ENCODE measurements at regions of chr5 and their contacts with region 1.

Region 1: GRCh38 chr5:159133041-159133741 is 33.5 kb upstream of the EBF1 start:
- DNase-seq: peak; percentile 80
- H3K4me3 Mint-ChIP-seq: no peak overlapping the region
- H3K27ac Mint-ChIP-seq: no peak overlapping the region
- H3K4me1 Mint-ChIP-seq: peaks cover 7% of the 10 kb centered on the region
- H3K27me3 Mint-ChIP-seq: no peaks in the 10 kb centered on the region
- CTCF ChIP-seq: peak; percentile 92

Region 2: DNA sequence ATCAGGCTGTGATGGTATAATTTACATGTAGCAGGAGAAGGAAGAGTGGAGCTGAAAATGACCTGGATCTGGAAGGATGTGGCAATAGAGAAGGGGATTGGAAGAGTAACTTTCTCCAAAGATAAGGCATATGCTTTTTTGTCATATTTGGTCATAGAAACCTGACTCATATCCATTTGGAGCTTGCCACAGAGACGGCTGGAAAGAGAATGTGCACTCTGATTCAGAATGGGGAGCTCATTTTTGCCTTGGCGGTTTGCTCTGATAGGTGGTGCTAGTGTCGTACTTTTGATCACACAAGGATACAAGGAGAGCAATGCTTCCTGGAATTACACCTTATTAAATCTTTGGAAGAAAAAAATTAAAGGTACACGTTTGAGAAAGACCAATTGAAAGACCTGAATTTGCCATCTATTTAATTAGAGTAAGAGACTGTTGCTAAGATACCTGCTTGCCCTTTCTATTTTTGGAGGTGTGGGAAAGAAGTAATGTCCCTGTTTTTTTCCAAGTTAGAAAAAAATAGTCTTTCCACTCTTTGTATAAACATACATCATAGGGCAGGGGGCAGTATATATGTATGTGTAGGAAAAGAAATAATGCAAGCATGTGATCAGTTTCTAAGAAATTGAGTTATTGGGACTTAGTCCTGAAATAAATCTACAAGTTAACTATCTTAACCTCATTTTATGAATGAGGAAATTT is 1384.3 kb before region 1 on chr5:
- CTCF ChIA-PET with region 1: no interaction called
- POLR2A ChIA-PET with region 1: interaction called, 4 read pairs
- intact Hi-C with region 1: loop called (anchors 1 kb)
- DNase-seq: peak; percentile 87
- H3K4me3 Mint-ChIP-seq: peak overlapping the region; percentile 10
- H3K27ac Mint-ChIP-seq: peak overlapping the region; percentile 70
- H3K4me1 Mint-ChIP-seq: peaks cover 40% of the 10 kb centered on the region
- H3K27me3 Mint-ChIP-seq: no peaks in the 10 kb centered on the region
- CTCF ChIP-seq: no peak

Region 3: DNA sequence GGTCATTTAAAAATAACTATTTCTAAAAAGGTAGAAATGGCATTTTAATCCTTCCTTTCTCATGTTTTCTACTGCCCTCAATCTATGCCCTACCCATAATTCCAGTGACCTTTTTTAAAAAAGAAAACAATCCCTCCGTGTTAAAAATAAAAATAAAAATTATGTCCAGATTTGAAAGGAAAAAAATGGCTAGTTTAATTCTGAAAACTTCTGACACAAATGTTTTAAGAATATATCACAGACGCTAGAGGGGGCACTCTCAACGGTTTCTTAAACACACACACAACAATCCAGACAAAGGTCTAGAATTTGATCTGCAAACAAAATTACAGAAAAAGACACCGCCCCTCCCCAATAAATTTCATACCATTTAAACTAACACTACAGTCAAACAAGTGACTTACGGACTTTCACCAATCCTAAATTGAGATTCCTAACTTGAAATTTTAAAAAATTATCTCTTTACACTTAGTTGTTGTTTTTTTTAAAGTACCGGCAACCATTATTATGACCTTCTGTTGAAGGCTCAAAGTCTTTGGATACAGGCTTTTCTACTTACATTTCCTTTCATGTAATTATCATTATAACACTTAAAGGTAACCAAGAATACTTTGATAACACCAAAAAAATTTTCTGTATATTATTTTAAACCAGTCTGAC is 1312.5 kb before region 1 on chr5:
- CTCF ChIA-PET with region 1: interaction called, 13 read pairs
- POLR2A ChIA-PET with region 1: no interaction called
- intact Hi-C with region 1: loop called (anchors 1 kb)
- DNase-seq: peak; percentile 68
- H3K4me3 Mint-ChIP-seq: no peak overlapping the region
- H3K27ac Mint-ChIP-seq: peak overlapping the region; percentile 61
- H3K4me1 Mint-ChIP-seq: peaks cover 21% of the 10 kb centered on the region
- H3K27me3 Mint-ChIP-seq: no peaks in the 10 kb centered on the region
- CTCF ChIP-seq: peak; percentile 68

Region 4: DNA sequence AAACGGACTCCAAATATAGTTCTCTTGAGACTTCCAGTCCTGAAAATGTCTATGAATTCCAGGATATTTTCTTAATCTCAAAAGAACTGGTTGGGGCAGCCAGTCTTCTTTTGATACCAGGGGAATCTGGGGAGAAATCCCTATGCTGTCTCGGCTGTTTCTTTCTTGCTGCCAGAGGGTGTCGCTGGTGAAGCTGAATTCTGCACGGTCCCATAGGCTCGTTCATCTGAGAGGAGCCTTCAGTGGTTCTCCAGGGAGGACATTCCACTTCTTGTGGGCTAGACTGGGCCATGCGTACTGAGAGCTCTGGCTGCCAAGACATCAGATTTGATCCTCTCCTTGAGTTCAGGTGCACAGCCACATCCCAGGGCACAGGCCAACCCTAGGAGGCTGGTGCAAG is 1119.3 kb before region 1 on chr5:
- CTCF ChIA-PET with region 1: interaction called, 11 read pairs
- POLR2A ChIA-PET with region 1: no interaction called
- intact Hi-C with region 1: loop called (anchors 1 kb)
- DNase-seq: peak; percentile 64
- H3K4me3 Mint-ChIP-seq: no peak overlapping the region
- H3K27ac Mint-ChIP-seq: no peak overlapping the region
- H3K4me1 Mint-ChIP-seq: no peaks in the 10 kb centered on the region
- H3K27me3 Mint-ChIP-seq: no peaks in the 10 kb centered on the region
- CTCF ChIP-seq: peak; percentile 68

Region 5: GRCh38 chr5:158701406-158702177 is 431.6 kb before region 1 on chr5:
- CTCF ChIA-PET with region 1: interaction called, 48 read pairs
- POLR2A ChIA-PET with region 1: no interaction called
- intact Hi-C with region 1: loop called (anchors 2 kb)
- DNase-seq: peak; percentile 82
- H3K4me3 Mint-ChIP-seq: no peak overlapping the region
- H3K27ac Mint-ChIP-seq: peak overlapping the region; percentile 12
- H3K4me1 Mint-ChIP-seq: peaks cover 23% of the 10 kb centered on the region
- H3K27me3 Mint-ChIP-seq: peaks cover 11% of the 10 kb centered on the region
- CTCF ChIP-seq: no peak

Region 6: DNA sequence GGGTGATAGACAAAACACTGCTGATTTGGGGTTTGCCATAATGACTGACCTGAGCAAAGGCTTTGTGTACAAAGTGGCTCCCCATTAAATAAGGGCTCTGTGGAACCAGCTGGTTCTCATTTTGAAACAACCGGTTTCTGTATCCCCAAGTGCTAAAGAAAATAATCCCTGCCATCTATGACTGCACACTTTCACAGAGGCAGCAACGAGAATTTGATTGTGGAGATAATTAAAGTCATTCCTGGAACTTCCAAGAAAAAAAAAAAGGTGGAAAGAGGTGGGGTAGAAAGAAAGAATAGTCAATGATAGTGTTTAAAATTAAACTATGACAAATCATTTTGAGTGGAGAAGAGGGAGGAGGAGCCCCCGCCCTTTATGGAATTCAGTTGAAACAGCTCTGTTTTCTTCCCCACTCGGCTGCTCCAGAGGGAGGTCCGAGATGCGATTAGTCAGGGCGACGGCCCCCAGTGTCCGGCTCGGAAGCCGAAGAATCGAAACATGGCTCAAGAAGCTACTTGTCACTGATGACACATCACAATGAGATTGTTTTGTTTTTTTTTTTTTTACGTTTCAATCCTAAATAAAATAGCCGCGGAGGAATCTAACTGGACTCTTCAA is 71.9 kb before region 1 on chr5:
- CTCF ChIA-PET with region 1: no interaction called
- POLR2A ChIA-PET with region 1: no interaction called
- intact Hi-C with region 1: no loop called
- DNase-seq: peak; percentile 56
- H3K4me3 Mint-ChIP-seq: no peak overlapping the region
- H3K27ac Mint-ChIP-seq: no peak overlapping the region
- H3K4me1 Mint-ChIP-seq: peaks cover 6% of the 10 kb centered on the region
- H3K27me3 Mint-ChIP-seq: no peaks in the 10 kb centered on the region
- CTCF ChIP-seq: no peak

Region 7: DNA sequence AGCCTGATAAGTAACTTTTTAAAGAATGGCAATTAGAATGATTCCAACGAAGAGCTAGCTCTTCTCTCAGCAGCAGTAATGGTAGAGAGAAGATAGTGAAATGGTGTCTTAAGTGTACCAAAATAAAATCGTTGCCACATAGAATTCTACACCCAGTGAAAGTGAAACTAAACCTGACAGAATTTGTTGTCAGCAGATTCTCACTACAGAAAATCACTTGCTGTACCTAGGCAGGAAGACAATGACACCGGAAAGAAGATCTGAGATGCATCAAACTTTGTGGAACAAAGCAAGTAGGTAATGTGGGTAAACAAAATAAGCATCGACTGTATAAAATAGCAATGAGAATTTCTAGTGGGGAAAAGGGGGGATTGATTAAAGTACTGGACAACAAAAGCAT is 12.7 kb before region 1 on chr5:
- CTCF ChIA-PET with region 1: interaction called, 30 read pairs
- POLR2A ChIA-PET with region 1: no interaction called
- intact Hi-C with region 1: no loop called
- DNase-seq: no peak
- H3K4me3 Mint-ChIP-seq: peak overlapping the region; percentile 1
- H3K27ac Mint-ChIP-seq: peak overlapping the region; percentile 13
- H3K4me1 Mint-ChIP-seq: peaks cover 10% of the 10 kb centered on the region
- H3K27me3 Mint-ChIP-seq: no peaks in the 10 kb centered on the region
- CTCF ChIP-seq: no peak

Measured in MCF 10A (cell line).